CD4-positive, alpha-beta T cell (primary cell): ENCODE measurements at regions of chr1 and their contacts with region 1.

Region 1: GRCh38 chr1:88180449-88181108 is 503.5 kb upstream of the PKN2 start:
- DNase-seq: peak; percentile 18 to 65 (median 31)
- ATAC-seq: peak; percentile 77
- H3K4me3 ChIP-seq: no peak overlapping the region
- H3K4me3 Mint-ChIP-seq: no peak overlapping the region
- H3K27ac ChIP-seq: no peak overlapping the region
- H3K27ac Mint-ChIP-seq: no peak overlapping the region
- H3K4me1 ChIP-seq: no peaks in the 10 kb centered on the region
- H3K4me1 Mint-ChIP-seq: no peaks in the 10 kb centered on the region
- H3K27me3 ChIP-seq: no peaks in the 10 kb centered on the region
- H3K27me3 Mint-ChIP-seq: peaks cover 14% of the 10 kb centered on the region
- CTCF ChIP-seq: peak; percentile 67

Region 2: GRCh38 chr1:87592156-87592555 is 588.4 kb before region 1 on chr1:
- CTCF ChIA-PET with region 1: no interaction called
- POLR2A ChIA-PET with region 1: no interaction called
- intact Hi-C with region 1: no loop called
- DNase-seq: no peak
- ATAC-seq: no peak
- H3K4me3 ChIP-seq: no peak overlapping the region
- H3K4me3 Mint-ChIP-seq: no peak overlapping the region
- H3K27ac ChIP-seq: no peak overlapping the region
- H3K27ac Mint-ChIP-seq: no peak overlapping the region
- H3K4me1 ChIP-seq: no peaks in the 10 kb centered on the region
- H3K4me1 Mint-ChIP-seq: no peaks in the 10 kb centered on the region
- H3K27me3 ChIP-seq: no peaks in the 10 kb centered on the region
- H3K27me3 Mint-ChIP-seq: no peaks in the 10 kb centered on the region
- CTCF ChIP-seq: no peak

Region 3: DNA sequence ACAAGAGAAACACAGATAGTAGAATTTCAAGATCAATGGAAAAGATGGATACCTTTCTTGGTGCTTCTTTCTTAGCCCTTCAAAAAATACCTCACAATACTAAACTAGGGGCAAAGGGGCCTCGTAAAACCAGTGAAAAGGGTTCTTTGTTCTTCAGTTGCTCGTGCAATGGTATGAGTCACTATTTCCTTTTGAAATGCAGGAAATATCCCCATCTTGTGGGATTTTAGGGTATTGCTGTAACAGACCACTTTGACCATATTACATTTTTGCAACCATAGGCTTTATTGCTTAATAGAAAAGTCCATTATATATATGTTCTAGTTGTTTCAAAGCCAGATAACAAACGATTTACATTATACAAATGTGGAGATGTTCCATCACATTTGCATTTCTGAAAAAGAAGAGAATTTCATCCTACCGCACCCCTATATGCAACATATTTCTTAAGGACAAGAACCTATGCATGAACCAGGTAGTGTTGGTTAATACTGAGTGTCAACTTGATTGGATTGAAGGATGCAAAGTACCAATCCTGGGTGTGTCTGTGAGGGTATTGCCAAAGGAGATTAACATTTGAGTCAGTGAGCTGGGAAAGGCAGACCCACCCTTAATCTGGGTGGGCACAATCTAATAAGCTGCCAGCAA is 414.9 kb after region 1 on chr1:
- CTCF ChIA-PET with region 1: no interaction called
- POLR2A ChIA-PET with region 1: no interaction called
- intact Hi-C with region 1: loop called (anchors 2 to 5 kb)
- DNase-seq: peak in 3 of 14 experiments; percentile 41 to 51 (median 46)
- ATAC-seq: peak; percentile 49
- H3K4me3 ChIP-seq: no peak overlapping the region
- H3K4me3 Mint-ChIP-seq: no peak overlapping the region
- H3K27ac ChIP-seq: no peak overlapping the region
- H3K27ac Mint-ChIP-seq: no peak overlapping the region
- H3K4me1 ChIP-seq: no peaks in the 10 kb centered on the region
- H3K4me1 Mint-ChIP-seq: no peaks in the 10 kb centered on the region
- H3K27me3 ChIP-seq: no peaks in the 10 kb centered on the region
- H3K27me3 Mint-ChIP-seq: peaks cover 11% of the 10 kb centered on the region
- CTCF ChIP-seq: peak; percentile 52